Astrocyte of the cerebellum (primary cell): ENCODE measurements at regions of chr5 and their contacts with region 1.

Region 1: DNA sequence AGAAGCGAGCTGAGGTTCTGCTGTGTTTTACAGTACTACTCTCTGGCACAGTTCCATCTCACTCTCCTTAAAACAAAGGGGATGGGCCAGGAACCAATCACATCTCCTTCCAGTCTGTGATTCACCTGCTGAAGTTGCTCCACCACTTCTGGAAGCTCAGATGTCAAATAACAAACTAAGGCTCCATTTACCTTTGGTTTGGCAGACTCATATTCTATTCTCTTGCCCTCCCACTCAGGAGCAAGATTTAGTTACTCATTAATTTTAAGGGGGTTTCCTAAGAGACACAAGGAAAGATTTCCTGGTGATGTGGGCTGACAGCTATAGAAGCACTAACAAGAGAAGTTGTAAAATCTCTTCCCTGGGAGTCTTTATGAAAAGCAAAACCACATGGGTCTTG is 37.8 kb upstream of the KIF2A start:
- DNase-seq: no peak
- H3K4me3 ChIP-seq: no peak overlapping the region
- CTCF ChIP-seq: no peak

Region 2: GRCh38 chr5:61981886-61982285 is 286.3 kb before region 1 on chr5:
- in situ Hi-C with region 1: no loop called
- DNase-seq: no peak
- H3K4me3 ChIP-seq: no peak overlapping the region
- CTCF ChIP-seq: no peak

Region 3: GRCh38 chr5:62315376-62316175 is 47.3 kb after region 1 on chr5:
- in situ Hi-C with region 1: no loop called
- DNase-seq: no peak
- H3K4me3 ChIP-seq: no peak overlapping the region
- CTCF ChIP-seq: no peak

Region 4: DNA sequence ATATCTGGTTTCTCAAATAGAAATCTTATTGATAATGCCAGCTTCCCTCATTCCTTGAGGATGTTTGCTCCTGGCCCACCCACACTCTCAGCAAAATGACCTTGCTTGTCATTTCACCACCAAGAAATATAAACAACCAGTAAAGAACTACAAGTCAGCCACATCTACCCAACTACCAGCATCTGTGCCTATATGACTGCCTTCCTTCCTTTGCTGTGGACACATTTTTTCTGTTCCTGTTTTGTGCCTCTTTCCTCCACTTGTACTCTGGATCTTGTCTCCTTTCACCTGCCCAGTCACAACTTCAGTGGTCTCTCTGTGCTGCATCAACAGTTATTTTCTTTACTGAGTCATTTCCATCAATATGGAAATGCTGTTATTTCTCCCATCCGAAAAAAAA is 58.1 kb after region 1 on chr5:
- in situ Hi-C with region 1: loop called (anchors 5 kb)
- DNase-seq: no peak
- H3K4me3 ChIP-seq: no peak overlapping the region
- CTCF ChIP-seq: no peak

Region 5: GRCh38 chr5:62354028-62354874 is 86.0 kb after region 1 on chr5:
- in situ Hi-C with region 1: loop called (anchors 5 kb)
- DNase-seq: peak; percentile 53
- H3K4me3 ChIP-seq: no peak overlapping the region
- CTCF ChIP-seq: peak; percentile 37

Region 6: GRCh38 chr5:62475072-62475471 is 206.8 kb after region 1 on chr5:
- in situ Hi-C with region 1: no loop called
- DNase-seq: peak; percentile 36
- H3K4me3 ChIP-seq: no peak overlapping the region
- CTCF ChIP-seq: no peak

Region 7: DNA sequence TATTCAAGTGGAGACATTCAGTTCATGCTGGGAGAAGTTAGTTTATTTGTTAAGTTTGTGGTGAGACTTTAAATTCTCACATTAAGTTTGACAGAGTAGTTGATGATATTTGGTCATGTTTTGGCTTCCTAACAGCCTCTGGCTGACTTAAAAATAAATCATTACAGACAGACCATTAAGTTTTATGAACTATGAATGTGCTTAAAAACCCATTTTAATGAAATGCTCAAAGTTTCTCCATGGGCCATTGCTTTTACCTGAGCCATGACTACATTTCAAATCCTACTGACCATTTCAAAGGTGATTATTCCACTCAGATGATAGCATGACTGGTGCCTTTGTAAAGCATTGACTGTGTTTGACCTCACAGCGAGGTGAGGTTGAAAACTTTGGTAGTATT is 503.1 kb after region 1 on chr5:
- in situ Hi-C with region 1: no loop called
- DNase-seq: no peak
- H3K4me3 ChIP-seq: no peak overlapping the region
- CTCF ChIP-seq: no peak